ENCODE measurements at regions of chr14 and their contacts with region 1.

Region 1: DNA sequence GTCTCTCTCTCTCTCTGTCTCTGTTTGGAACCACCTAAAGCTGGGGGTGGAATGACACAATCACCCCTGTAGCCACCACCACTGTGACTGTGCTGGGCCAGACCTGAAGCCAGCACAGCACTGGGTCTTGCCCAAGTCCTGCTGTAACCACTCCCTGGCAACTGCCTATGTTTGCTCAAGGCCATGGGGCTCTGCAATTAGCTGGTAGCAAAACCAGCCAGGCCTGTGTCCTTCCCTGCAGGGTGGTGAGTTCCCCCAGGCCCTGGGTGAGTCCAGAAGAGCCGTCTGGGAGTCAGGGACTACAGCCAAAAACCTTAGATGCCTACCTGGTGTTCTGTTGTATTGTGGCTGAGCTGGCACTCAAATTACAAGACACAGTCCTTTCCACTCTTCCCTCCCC is 50.8 kb downstream of the DGLUCY start:
- DNase-seq: no peak
- H3K4me3 ChIP-seq: no peak overlapping the region
- CTCF ChIP-seq: no peak

Region 2: GRCh38 chr14:90842726-90843125 is 322.0 kb before region 1 on chr14:
- in situ Hi-C with region 1: loop called (anchors 10 kb)
- DNase-seq: no peak
- H3K4me3 ChIP-seq: no peak overlapping the region
- CTCF ChIP-seq: no peak

Region 3: GRCh38 chr14:90905531-90905930 is 259.2 kb before region 1 on chr14:
- in situ Hi-C with region 1: loop called (anchors 5 kb)
- DNase-seq: no peak
- H3K4me3 ChIP-seq: no peak overlapping the region
- CTCF ChIP-seq: no peak

Region 4: GRCh38 chr14:91059576-91060350 is 104.9 kb before region 1 on chr14:
- in situ Hi-C with region 1: loop called (anchors 5 kb)
- DNase-seq: no peak
- H3K4me3 ChIP-seq: peak overlapping the region; percentile 79
- CTCF ChIP-seq: no peak

Region 5: DNA sequence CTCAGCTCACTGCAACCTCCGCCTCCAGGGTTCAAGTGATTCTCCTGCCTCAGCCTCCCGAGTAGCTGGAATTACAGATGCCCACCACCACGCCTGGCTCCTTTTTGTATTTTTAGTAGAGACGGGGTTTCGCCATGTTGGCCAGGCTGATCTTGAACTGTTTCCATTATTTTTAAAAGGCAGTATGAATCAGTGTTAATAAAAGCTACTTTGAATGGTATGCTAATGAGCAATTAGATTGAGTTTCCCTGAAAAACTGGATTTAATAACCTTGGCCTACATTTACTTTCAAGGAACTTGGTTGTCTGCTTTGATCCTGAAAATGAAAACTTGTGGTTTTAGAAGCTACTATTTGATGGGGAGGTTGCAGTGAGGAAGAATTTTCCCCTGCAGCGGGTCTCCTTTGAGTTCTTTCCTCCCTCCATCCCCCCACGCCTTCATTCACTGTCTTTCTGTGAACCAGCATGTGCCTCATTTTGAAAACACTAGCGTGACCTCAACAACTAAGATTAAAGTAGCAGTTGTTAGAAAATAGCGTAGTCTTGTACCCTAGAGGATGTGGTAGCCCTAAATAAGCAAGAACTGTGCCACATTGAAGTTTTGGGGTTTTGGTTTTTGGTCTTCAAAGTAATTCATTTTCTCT is 86.5 kb before region 1 on chr14:
- in situ Hi-C with region 1: no loop called
- DNase-seq: no peak
- H3K4me3 ChIP-seq: no peak overlapping the region
- CTCF ChIP-seq: no peak